ENCODE measurements at regions of chr16 and their contacts with region 1.

Region 1: GRCh38 chr16:11255737-11256660 is at the start of gene SOCS1:
- DNase-seq: peak; percentile 87
- ATAC-seq: peak; percentile 65
- H3K4me3 Mint-ChIP-seq: peak within 1 kb of the TSS; percentile 97
- H3K27ac Mint-ChIP-seq: peak within 1 kb of the TSS; percentile 94
- H3K4me1 Mint-ChIP-seq: peaks cover 41% of the 10 kb centered on the region
- H3K27me3 Mint-ChIP-seq: no peaks in the 10 kb centered on the region
- CTCF ChIP-seq: peak; percentile 84
- total RNA-seq, gene SOCS1: 75.7 to 75.8 TPM

Region 2: DNA sequence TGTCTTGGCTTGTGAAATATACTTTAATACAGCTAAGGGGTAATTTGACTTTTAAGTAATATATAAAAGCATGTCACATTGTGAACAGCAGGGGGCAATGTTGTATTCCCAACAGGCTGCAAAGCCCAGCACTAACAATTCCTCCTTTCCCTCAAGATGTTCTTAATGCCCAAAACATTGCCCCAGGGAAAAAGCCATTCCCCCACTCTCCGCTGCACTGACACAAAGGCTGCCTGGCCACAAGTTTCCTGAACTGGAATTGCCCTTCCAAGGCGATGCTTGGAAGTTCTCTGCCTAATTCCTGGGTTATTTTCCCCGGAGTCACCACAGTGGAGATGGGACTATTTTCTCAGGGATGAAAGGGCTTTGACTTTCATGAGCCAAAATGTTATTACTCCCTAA is 284.4 kb before region 1 on chr16:
- CTCF ChIA-PET with region 1: interaction called, 80 read pairs
- POLR2A ChIA-PET with region 1: interaction called, 94 read pairs
- intact Hi-C with region 1: loop called (anchors 2 kb)
- DNase-seq: peak; percentile 47
- ATAC-seq: no peak
- H3K4me3 Mint-ChIP-seq: no peak overlapping the region
- H3K27ac Mint-ChIP-seq: peak overlapping the region; percentile 32
- H3K4me1 Mint-ChIP-seq: peaks cover 31% of the 10 kb centered on the region
- H3K27me3 Mint-ChIP-seq: no peaks in the 10 kb centered on the region
- CTCF ChIP-seq: peak; percentile 95

Region 3: GRCh38 chr16:11076259-11077018 is 179.6 kb before region 1 on chr16:
- CTCF ChIA-PET with region 1: interaction called, 5 read pairs
- POLR2A ChIA-PET with region 1: interaction called, 30 read pairs
- intact Hi-C with region 1: no loop called
- DNase-seq: peak; percentile 93
- ATAC-seq: peak; percentile 88
- H3K4me3 Mint-ChIP-seq: no peak overlapping the region
- H3K27ac Mint-ChIP-seq: peak overlapping the region; percentile 91
- H3K4me1 Mint-ChIP-seq: peaks cover 90% of the 10 kb centered on the region
- H3K27me3 Mint-ChIP-seq: no peaks in the 10 kb centered on the region
- CTCF ChIP-seq: no peak

Region 4: GRCh38 chr16:11181899-11182279 is 74.1 kb before region 1 on chr16:
- CTCF ChIA-PET with region 1: no interaction called
- POLR2A ChIA-PET with region 1: interaction called, 9 read pairs
- intact Hi-C with region 1: loop called (anchors 5 kb)
- DNase-seq: peak; percentile 59
- ATAC-seq: peak; percentile 52
- H3K4me3 Mint-ChIP-seq: no peak overlapping the region
- H3K27ac Mint-ChIP-seq: peak overlapping the region; percentile 84
- H3K4me1 Mint-ChIP-seq: peaks cover 62% of the 10 kb centered on the region
- H3K27me3 Mint-ChIP-seq: no peaks in the 10 kb centered on the region
- CTCF ChIP-seq: no peak

Region 5: DNA sequence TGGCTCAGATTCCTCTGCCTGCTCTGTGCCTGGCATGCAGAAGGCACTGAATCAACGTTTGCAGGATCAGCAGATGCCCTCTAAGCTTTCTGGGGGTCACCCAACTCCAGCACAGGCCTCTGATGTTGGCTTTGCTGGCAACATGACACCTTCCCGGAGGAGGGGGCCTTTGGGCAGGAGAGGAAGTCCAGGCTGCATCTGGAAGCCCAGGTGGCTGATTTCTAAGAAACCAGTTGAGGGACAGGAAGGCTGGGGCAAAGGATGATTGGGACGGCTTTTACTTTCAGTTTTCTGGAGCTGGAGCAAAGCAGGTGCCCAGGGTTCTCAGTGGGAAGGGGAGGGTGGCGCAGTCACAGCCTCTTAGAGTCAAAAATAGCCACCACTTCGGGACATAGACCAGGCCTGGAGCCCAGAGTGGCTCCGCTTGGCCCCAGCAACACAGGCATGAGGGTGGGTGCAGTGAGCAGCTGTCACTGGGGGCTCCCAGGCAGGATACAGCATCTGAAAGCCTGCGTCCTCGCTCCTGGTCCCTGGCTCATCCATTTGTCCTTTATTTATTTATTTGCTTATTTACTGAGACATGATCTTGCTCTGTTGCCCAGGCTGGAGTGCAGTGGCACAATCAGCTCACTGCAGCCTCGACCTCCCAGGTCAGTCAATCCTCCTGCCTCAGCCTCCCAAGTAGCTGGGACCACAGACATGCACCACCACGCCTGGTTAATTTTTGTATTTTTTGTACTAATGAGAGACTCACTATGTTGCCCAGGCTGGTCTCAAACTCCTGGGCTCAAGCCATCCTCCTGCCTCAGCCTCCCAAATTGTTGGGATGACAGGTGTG is 15.1 kb before region 1 on chr16:
- CTCF ChIA-PET with region 1: interaction called, 4 read pairs
- POLR2A ChIA-PET with region 1: interaction called, 52 read pairs
- intact Hi-C with region 1: no loop called
- DNase-seq: no peak
- ATAC-seq: peak; percentile 28
- H3K4me3 Mint-ChIP-seq: no peak overlapping the region
- H3K27ac Mint-ChIP-seq: peak overlapping the region; percentile 81
- H3K4me1 Mint-ChIP-seq: peaks cover 28% of the 10 kb centered on the region
- H3K27me3 Mint-ChIP-seq: no peaks in the 10 kb centered on the region
- CTCF ChIP-seq: no peak

Region 6: GRCh38 chr16:11345040-11345862 is 89.3 kb after region 1 on chr16 and contains the start of gene RMI2:
- CTCF ChIA-PET with region 1: interaction called, 3 read pairs
- POLR2A ChIA-PET with region 1: interaction called, 21 read pairs
- intact Hi-C with region 1: no loop called
- DNase-seq: peak; percentile 98
- ATAC-seq: peak; percentile 99
- H3K4me3 Mint-ChIP-seq: peak within 1 kb of the TSS; percentile 83
- H3K27ac Mint-ChIP-seq: peak within 1 kb of the TSS; percentile 84
- H3K4me1 Mint-ChIP-seq: peaks cover 48% of the 10 kb centered on the region
- H3K27me3 Mint-ChIP-seq: no peaks in the 10 kb centered on the region
- CTCF ChIP-seq: no peak
- total RNA-seq, gene RMI2: 53.1 to 57.7 TPM

Measured in activated CD8-positive, alpha-beta T cell treated with anti-CD3 and anti-CD28 coated beads for 36 hours (primary cell).